IMR-90 (cell line): ENCODE measurements at regions of chr7 and their contacts with region 1.

Region 1: GRCh38 chr7:90262438-90262837 is 17.5 kb downstream of the CFAP69 start:
- DNase-seq: peak; percentile 35
- ATAC-seq: peak; percentile 82
- H3K4me3 ChIP-seq: no peak overlapping the region
- H3K27ac ChIP-seq: no peak overlapping the region
- H3K4me1 ChIP-seq: no peaks in the 10 kb centered on the region
- H3K27me3 ChIP-seq: no peaks in the 10 kb centered on the region; the same call in 1 of the 2 replicates
- CTCF ChIP-seq: peak; percentile 57
- POLR2A ChIP-seq: no peak
- RAD21 ChIP-seq: peak; percentile 67

Region 2: DNA sequence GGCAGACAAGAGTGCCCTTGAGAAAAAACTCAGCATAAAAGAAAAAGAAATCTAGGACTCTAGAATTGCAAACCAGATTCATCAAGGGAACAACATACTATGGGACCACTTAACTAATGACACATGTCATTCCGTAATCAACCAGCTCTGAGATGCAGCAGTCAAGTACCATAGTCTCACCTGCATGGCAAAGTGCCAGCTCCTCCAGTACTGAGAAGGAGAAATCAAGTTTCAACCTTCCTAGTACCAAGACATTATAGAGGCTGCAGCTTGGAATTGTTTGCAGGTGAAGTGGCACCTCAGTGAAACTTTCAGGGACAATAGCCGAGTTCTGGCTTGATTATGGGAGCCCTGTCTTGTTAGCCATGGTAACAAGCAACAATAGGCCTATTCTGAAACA is 96.7 kb before region 1 on chr7:
- CTCF ChIA-PET with region 1: interaction called, 3 read pairs
- POLR2A ChIA-PET with region 1: no interaction called
- dilution Hi-C with region 1: no loop called
- in situ Hi-C with region 1: loop called (anchors 10 kb)
- intact Hi-C with region 1: no loop called
- DNase-seq: no peak
- ATAC-seq: no peak
- H3K4me3 ChIP-seq: no peak overlapping the region
- H3K27ac ChIP-seq: no peak overlapping the region
- H3K4me1 ChIP-seq: no peaks in the 10 kb centered on the region
- H3K27me3 ChIP-seq: no peaks in the 10 kb centered on the region
- CTCF ChIP-seq: no peak
- POLR2A ChIP-seq: no peak
- RAD21 ChIP-seq: no peak

Region 3: GRCh38 chr7:90424720-90425119 is 162.3 kb after region 1 on chr7:
- CTCF ChIA-PET with region 1: no interaction called
- POLR2A ChIA-PET with region 1: no interaction called
- dilution Hi-C with region 1: no loop called
- in situ Hi-C with region 1: no loop called
- intact Hi-C with region 1: loop called (anchors 1 kb)
- DNase-seq: no peak
- ATAC-seq: no peak
- H3K4me3 ChIP-seq: no peak overlapping the region
- H3K27ac ChIP-seq: no peak overlapping the region
- H3K4me1 ChIP-seq: no peaks in the 10 kb centered on the region
- H3K27me3 ChIP-seq: no peaks in the 10 kb centered on the region
- CTCF ChIP-seq: no peak
- POLR2A ChIP-seq: no peak
- RAD21 ChIP-seq: no peak